ENCODE measurements at regions of chr11 and their contacts with region 1.

Region 1: GRCh38 chr11:134464981-134465730 is 53.1 kb upstream of the B3GAT1 start:
- DNase-seq: no peak
- ATAC-seq: no peak
- H3K4me3 ChIP-seq: no peak overlapping the region
- H3K4me3 Mint-ChIP-seq: no peak overlapping the region
- H3K27ac ChIP-seq: no peak overlapping the region
- H3K27ac Mint-ChIP-seq: no peak overlapping the region
- H3K4me1 ChIP-seq: no peaks in the 10 kb centered on the region
- H3K4me1 Mint-ChIP-seq: no peaks in the 10 kb centered on the region
- H3K27me3 ChIP-seq: peaks cover 0 to 41% of the 10 kb centered on the region in 2 experiments
- H3K27me3 Mint-ChIP-seq: peaks cover 48 to 49% of the 10 kb centered on the region in 2 donors

Region 2: GRCh38 chr11:134449713-134450112 is 15.4 kb before region 1 on chr11:
- CTCF ChIA-PET with region 1: interaction called in 1 of 2 experiments, 11 read pairs
- POLR2A ChIA-PET with region 1: no interaction called
- DNase-seq: peak in 5 of 35 experiments; percentile 2 to 22 (median 9)
- ATAC-seq: peak in 2 of 4 experiments; percentile 50 to 53
- H3K4me3 ChIP-seq: no peak overlapping the region
- H3K4me3 Mint-ChIP-seq: no peak overlapping the region
- H3K27ac ChIP-seq: no peak overlapping the region
- H3K27ac Mint-ChIP-seq: no peak overlapping the region
- H3K4me1 ChIP-seq: no peaks in the 10 kb centered on the region
- H3K4me1 Mint-ChIP-seq: no peaks in the 10 kb centered on the region
- H3K27me3 ChIP-seq: peaks cover 0 to 15% of the 10 kb centered on the region in 2 experiments
- H3K27me3 Mint-ChIP-seq: peaks cover 7% of the 10 kb centered on the region in 2 donors